ENCODE measurements at regions of chr5 and their contacts with region 1.

Region 1: DNA sequence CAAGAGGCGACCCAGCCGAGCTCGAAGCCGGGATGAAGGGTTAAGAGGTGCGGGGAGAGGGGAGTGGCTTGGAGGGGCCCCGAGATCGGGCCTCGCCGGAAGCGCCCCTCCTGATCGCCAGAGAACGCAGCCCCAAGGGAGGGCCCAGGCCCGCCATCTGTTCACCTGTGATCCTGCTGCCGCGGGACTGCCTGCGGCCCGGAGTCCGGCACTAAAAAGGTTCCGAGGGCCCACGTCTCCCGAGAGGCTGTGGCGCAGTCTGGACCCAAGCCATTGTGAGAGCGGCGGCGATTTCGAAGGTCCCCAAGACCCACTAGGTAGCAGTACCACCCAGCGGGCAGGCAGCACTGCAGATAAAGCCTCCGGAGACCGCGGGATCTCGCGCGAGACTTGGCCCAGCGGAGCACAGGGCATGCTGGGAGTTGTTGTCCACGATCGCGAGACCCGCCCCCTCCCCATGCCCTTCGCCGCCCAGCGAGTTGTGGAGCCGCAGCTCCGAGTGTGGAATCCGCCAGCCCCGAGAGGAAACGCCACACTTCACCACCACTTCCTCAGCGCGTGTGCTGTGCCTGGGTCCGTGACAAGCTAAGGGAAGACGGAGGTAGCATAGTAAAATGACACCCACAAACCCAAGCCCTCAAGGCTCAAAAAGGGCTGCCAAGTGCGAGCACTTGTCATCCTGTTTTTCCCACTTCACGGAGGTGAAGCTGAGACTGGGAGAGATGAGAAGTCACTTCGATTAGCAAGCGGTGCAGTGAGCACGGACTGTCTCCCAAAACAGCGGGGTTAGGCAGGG is at the start of gene KIAA1191:
- DNase-seq: peak; percentile 94
- ATAC-seq: peak; percentile 87
- H3K4me3 Mint-ChIP-seq: peak within 1 kb of the TSS; percentile 99
- H3K27ac Mint-ChIP-seq: peak within 1 kb of the TSS; percentile 96
- H3K4me1 Mint-ChIP-seq: peaks cover 33% of the 10 kb centered on the region
- H3K27me3 Mint-ChIP-seq: no peaks in the 10 kb centered on the region
- total RNA-seq, gene KIAA1191: 70.0 to 72.0 TPM

Region 2: DNA sequence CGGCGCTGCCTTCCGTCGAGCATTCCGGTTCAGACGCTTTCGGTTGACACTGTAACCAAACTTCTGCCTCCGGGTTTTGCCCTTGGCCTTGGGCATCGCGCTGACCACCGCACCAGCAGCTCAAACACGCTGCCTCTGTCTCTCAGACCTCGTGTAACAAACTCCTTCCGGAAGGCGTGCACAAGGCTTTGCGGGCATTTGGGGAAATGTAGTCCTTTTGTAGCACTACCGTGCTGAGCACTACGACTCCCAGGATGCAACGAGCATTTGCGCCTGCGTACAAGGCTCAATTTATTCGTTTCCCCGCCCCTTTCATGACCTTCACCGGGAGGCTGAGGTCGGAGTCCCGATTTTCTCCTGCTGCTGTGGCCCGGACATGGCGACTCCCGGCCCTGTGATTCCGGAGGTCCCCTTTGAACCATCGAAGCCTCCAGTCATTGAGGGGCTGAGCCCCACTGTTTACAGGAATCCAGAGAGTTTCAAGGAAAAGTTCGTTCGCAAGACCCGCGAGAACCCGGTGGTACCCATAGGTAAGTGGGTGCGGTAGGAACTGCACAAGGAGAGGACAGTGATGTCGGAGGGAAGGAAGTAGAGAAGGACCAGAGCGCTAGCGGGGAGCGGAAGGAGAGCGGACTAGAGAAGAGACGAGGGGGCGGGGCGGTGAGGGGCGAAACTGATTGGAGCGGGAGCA is 27.0 kb after region 1 on chr5 and contains the starts of genes HIGD2A and NOP16:
- POLR2A ChIA-PET with region 1: interaction called, 36 read pairs
- DNase-seq: peak; percentile 94
- ATAC-seq: peak; percentile 91
- H3K4me3 Mint-ChIP-seq: peak within 1 kb of the TSS; percentile 100
- H3K27ac Mint-ChIP-seq: peak within 1 kb of the TSS; percentile 99
- H3K4me1 Mint-ChIP-seq: peaks cover 27% of the 10 kb centered on the region
- H3K27me3 Mint-ChIP-seq: no peaks in the 10 kb centered on the region
- total RNA-seq, gene HIGD2A: 97.6 to 97.7 TPM
- total RNA-seq, gene NOP16: 27.5 to 30.3 TPM

Region 3: GRCh38 chr5:176543428-176544173 is 182.0 kb after region 1 on chr5:
- POLR2A ChIA-PET with region 1: no interaction called
- DNase-seq: peak; percentile 89
- ATAC-seq: peak; percentile 78
- H3K4me3 Mint-ChIP-seq: peak overlapping the region; percentile 94
- H3K27ac Mint-ChIP-seq: peak overlapping the region; percentile 96
- H3K4me1 Mint-ChIP-seq: peaks cover 48% of the 10 kb centered on the region
- H3K27me3 Mint-ChIP-seq: no peaks in the 10 kb centered on the region

Measured in activated naive CD8-positive, alpha-beta T cell treated with anti-CD3 and anti-CD28 coated beads, Interleukin-2, amount 10 ng/mL, durations not matched to agents 7 days and 5 days (primary cell).